ENCODE measurements at regions of chr16 and their contacts with region 1.

Region 1: DNA sequence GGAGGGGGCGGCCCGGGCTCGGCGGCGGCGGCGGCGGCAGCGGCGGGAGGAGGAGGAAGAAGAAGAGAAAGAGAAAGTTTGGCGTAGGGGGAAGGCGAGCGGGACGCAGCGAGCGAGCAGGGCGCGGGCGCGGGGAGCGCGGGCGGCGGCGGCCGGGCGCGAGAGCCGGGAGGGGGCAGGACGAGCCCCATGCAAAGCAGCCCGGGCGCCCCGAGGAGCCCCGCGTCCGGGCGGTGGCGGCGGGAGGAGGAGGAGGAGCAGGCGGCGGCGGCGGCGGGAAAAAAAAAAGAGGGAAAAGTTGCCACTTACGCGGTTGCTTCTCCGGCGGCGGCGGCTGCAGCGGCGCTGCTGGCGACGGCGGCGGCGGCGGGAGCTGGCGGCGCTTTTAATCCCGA is 10.3 kb upstream of the ZFHX3 start:
- DNase-seq: no peak
- ATAC-seq: peak; percentile 25
- H3K4me3 ChIP-seq: peak overlapping the region; percentile 82
- H3K27ac ChIP-seq: peak overlapping the region; percentile 4
- H3K4me1 ChIP-seq: peaks cover 23% of the 10 kb centered on the region
- H3K27me3 ChIP-seq: no peaks in the 10 kb centered on the region
- CTCF ChIP-seq: 0 out of 2 replicates have a peak, but pooled peaks have one; percentile 5
- POLR2A ChIP-seq: no peak
- RAD21 ChIP-seq: no peak

Region 2: GRCh38 chr16:72124761-72125634 is 933.2 kb before region 1 on chr16:
- CTCF ChIA-PET with region 1: no interaction called
- POLR2A ChIA-PET with region 1: no interaction called
- dilution Hi-C with region 1: no loop called
- in situ Hi-C with region 1: no loop called
- intact Hi-C with region 1: loop called (anchors 10 kb)
- DNase-seq: peak; percentile 69
- ATAC-seq: peak; percentile 97
- H3K4me3 ChIP-seq: no peak overlapping the region
- H3K27ac ChIP-seq: no peak overlapping the region
- H3K4me1 ChIP-seq: no peaks in the 10 kb centered on the region
- H3K27me3 ChIP-seq: peaks cover 4% of the 10 kb centered on the region; the same call in 1 of the 2 replicates
- CTCF ChIP-seq: peak; percentile 80
- POLR2A ChIP-seq: no peak
- RAD21 ChIP-seq: peak; percentile 84

Region 3: DNA sequence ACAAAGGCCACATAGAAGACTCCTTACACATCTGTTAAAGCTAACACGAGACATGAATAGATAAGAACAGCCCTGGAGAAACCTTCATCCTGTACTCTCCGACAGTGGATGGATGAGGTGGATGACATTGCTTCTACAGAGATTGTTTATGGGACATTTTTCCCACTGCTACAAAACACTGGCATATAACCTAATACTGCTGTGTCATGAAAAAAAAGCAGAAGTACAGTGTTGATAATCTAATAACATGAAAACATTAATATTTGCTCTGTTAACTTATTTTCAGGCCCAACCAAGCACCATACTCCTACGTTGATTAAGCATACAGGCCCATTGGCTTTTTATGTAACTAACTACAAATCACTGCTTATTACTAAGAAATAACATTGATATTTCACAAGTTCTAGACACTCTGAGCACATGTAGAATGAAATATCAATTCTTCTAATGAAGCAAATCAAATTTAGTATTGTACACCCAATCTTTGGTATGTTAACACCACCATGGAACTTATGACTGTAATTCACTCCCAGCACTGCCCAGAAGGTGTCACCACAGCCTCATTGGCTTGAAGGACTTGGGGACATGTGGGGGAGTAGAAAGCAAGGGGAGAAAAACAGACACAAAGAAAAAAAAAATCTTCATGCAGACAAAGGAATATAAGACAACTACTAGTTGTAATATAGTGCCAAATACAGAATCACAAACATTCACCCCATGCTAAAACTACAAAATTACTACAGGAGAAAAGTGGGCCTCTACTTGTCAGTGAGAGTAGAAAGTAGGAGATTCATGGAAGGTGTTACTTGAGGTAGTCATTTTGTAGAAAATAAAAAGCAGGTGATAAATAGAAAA is 556.3 kb before region 1 on chr16:
- CTCF ChIA-PET with region 1: interaction called, 5 read pairs
- POLR2A ChIA-PET with region 1: interaction called, 3 read pairs
- dilution Hi-C with region 1: no loop called
- in situ Hi-C with region 1: no loop called
- intact Hi-C with region 1: loop called (anchors 5 kb)
- DNase-seq: peak; percentile 79
- ATAC-seq: peak; percentile 99
- H3K4me3 ChIP-seq: no peak overlapping the region
- H3K27ac ChIP-seq: no peak overlapping the region
- H3K4me1 ChIP-seq: no peaks in the 10 kb centered on the region
- H3K27me3 ChIP-seq: no peaks in the 10 kb centered on the region
- CTCF ChIP-seq: peak; percentile 96
- POLR2A ChIP-seq: 0 out of 2 replicates have a peak, but pooled peaks have one; percentile 35
- RAD21 ChIP-seq: peak; percentile 95

Region 4: DNA sequence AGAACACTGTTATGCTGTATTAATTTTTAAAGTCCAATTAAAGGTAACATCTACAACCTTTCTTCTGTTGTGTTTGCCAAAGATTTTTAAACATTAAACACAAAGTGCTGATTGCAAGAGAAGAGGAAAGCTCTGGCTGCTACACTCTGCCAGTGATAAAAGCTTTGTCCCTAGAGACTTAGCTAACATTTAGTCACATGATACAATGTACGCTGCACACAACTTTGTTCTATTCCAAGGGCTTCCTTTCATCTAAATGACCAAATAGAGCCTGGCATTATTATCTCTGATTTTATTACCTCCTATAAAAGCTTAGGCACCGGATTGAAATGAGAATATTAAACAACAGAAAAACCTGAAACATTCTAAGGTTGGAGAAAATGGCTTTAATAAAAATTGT is 497.6 kb before region 1 on chr16:
- CTCF ChIA-PET with region 1: no interaction called
- POLR2A ChIA-PET with region 1: no interaction called
- dilution Hi-C with region 1: no loop called
- in situ Hi-C with region 1: no loop called
- intact Hi-C with region 1: no loop called
- DNase-seq: no peak
- ATAC-seq: no peak
- H3K4me3 ChIP-seq: no peak overlapping the region
- H3K27ac ChIP-seq: no peak overlapping the region
- H3K4me1 ChIP-seq: no peaks in the 10 kb centered on the region
- H3K27me3 ChIP-seq: no peaks in the 10 kb centered on the region
- CTCF ChIP-seq: no peak
- POLR2A ChIP-seq: no peak
- RAD21 ChIP-seq: no peak

Region 5: GRCh38 chr16:72832621-72833248 is 225.5 kb before region 1 on chr16:
- CTCF ChIA-PET with region 1: interaction called, 8 read pairs
- POLR2A ChIA-PET with region 1: interaction called, 4 read pairs
- dilution Hi-C with region 1: no loop called
- in situ Hi-C with region 1: no loop called
- intact Hi-C with region 1: loop called (anchors 2 kb)
- DNase-seq: peak; percentile 70
- ATAC-seq: peak; percentile 97
- H3K4me3 ChIP-seq: no peak overlapping the region
- H3K27ac ChIP-seq: no peak overlapping the region
- H3K4me1 ChIP-seq: peaks cover 4% of the 10 kb centered on the region
- H3K27me3 ChIP-seq: no peaks in the 10 kb centered on the region
- CTCF ChIP-seq: peak; percentile 96
- POLR2A ChIP-seq: no peak
- RAD21 ChIP-seq: peak; percentile 96

Region 6: GRCh38 chr16:73172241-73172972 is 114.2 kb after region 1 on chr16:
- CTCF ChIA-PET with region 1: interaction called, 4 read pairs
- POLR2A ChIA-PET with region 1: no interaction called
- dilution Hi-C with region 1: no loop called
- in situ Hi-C with region 1: no loop called
- intact Hi-C with region 1: loop called (anchors 1 kb)
- DNase-seq: peak; percentile 91
- ATAC-seq: peak; percentile 78
- H3K4me3 ChIP-seq: no peak overlapping the region
- H3K27ac ChIP-seq: peak overlapping the region; percentile 68; the same call in 1 of the 2 replicates
- H3K4me1 ChIP-seq: peaks cover 16% of the 10 kb centered on the region
- H3K27me3 ChIP-seq: 0 out of 2 replicates have a peak, but pooled peaks cover 3% of the 10 kb centered on the region
- CTCF ChIP-seq: peak; percentile 36
- POLR2A ChIP-seq: no peak
- RAD21 ChIP-seq: peak; percentile 36

Region 7: GRCh38 chr16:73878611-73879010 is 820.4 kb after region 1 on chr16:
- CTCF ChIA-PET with region 1: no interaction called
- POLR2A ChIA-PET with region 1: no interaction called
- dilution Hi-C with region 1: no loop called
- in situ Hi-C with region 1: no loop called
- intact Hi-C with region 1: loop called (anchors 5 kb)
- DNase-seq: peak; percentile 76
- ATAC-seq: peak; percentile 77
- H3K4me3 ChIP-seq: no peak overlapping the region
- H3K27ac ChIP-seq: no peak overlapping the region
- H3K4me1 ChIP-seq: no peaks in the 10 kb centered on the region
- H3K27me3 ChIP-seq: no peaks in the 10 kb centered on the region
- CTCF ChIP-seq: peak; percentile 67
- POLR2A ChIP-seq: no peak
- RAD21 ChIP-seq: peak; percentile 84